Mucosa of descending colon (tissue), 3 donors: ENCODE measurements at regions of chr11 and their contacts with region 1.

Region 1: GRCh38 chr11:78645226-78646202 is 70.8 kb upstream of the NARS2 start:
- DNase-seq: peak in 2 of 3 donors; percentile 86 to 88
- ATAC-seq: peak; percentile 92
- H3K4me3 ChIP-seq: no peak overlapping the region
- H3K4me1 ChIP-seq: no peaks in the 10 kb centered on the region
- CTCF ChIP-seq: peak; percentile 90

Region 2: GRCh38 chr11:78801161-78801884 is 155.8 kb after region 1 on chr11:
- intact Hi-C with region 1: loop called in 1 of 2 experiments (anchors 10 kb)
- DNase-seq: peak in 1 of 3 donors; percentile 51
- ATAC-seq: peak; percentile 74
- H3K4me3 ChIP-seq: no peak overlapping the region
- H3K4me1 ChIP-seq: peaks cover 15% of the 10 kb centered on the region
- CTCF ChIP-seq: no peak

Region 3: GRCh38 chr11:79076526-79077115 is 431.1 kb after region 1 on chr11:
- intact Hi-C with region 1: loop called in 1 of 2 experiments (anchors 10 kb)
- DNase-seq: peak in 2 of 3 donors; percentile 57 to 78
- ATAC-seq: no peak
- H3K4me3 ChIP-seq: no peak overlapping the region
- H3K4me1 ChIP-seq: no peaks in the 10 kb centered on the region
- CTCF ChIP-seq: peak; percentile 39

Region 4: DNA sequence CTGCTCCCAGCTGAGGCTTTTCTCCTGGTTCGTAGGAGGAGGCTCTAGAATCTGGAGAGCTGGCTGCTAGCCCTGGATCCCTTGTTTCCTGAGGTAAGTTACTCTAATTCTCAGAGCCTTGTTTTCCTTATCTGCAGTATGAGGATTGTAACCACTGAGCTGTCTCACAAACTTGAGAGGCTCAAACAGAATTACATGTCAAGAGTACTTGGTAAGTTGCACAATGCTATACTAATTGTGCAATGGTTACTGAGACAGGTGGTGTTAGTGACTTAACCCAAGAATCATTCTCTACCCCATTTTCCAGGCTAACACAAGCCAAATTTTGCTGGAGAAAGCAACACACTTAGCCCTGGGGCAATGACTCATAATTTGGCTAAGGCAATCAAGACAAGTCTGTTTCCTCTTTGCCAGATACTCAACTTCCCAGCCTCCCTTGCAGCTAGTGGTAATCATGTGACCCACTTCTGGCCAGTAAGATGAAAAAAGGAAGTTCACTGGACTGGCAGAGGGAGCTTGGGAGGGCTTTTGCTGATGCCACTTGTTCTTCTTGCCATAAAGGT is 447.4 kb after region 1 on chr11:
- intact Hi-C with region 1: loop called in 1 of 2 experiments (anchors 10 kb)
- DNase-seq: peak in 1 of 3 donors; percentile 5
- ATAC-seq: peak; percentile 10
- H3K4me3 ChIP-seq: no peak overlapping the region
- H3K4me1 ChIP-seq: no peaks in the 10 kb centered on the region
- CTCF ChIP-seq: no peak